Right ventricle myocardium superior (tissue), 1 donor: ENCODE measurements at regions of chr10 and their contacts with region 1.

Region 1: GRCh38 chr10:44932517-44933450 is 21.6 kb downstream of the TMEM72 start:
- DNase-seq: peak; percentile 97
- ATAC-seq: peak; percentile 91

Region 2: GRCh38 chr10:44974628-44975431 is 42.0 kb after region 1 on chr10:
- intact Hi-C with region 1: loop called (anchors 5 kb)
- DNase-seq: peak; percentile 86
- ATAC-seq: peak; percentile 78

Region 3: DNA sequence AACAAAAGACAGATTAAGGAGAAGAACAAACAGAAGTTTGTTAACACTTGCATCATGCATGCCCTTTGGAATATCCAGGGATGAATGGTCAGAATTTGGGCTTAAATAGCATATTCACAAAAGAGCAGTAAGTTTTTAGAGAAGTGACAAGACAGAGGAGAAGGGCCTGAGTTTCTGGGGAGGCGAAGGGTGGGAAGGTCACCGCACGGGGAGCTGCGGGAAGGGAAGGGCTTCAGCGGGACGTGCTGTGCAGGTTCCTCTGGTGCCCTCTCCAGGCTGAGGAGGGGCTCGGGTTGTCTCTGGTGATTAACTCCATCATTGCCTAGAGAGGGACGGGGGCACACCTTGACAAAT is 57.5 kb after region 1 on chr10:
- intact Hi-C with region 1: loop called (anchors 5 kb)
- DNase-seq: peak; percentile 47
- ATAC-seq: peak; percentile 45